ENCODE measurements at regions of chr5 and their contacts with region 1.

Region 1: GRCh38 chr5:137629646-137630045 is 106.2 kb downstream of the KLHL3 start:
- DNase-seq: no peak
- ATAC-seq: peak; percentile 69
- H3K4me3 Mint-ChIP-seq: no peak overlapping the region
- H3K27ac Mint-ChIP-seq: no peak overlapping the region
- H3K4me1 Mint-ChIP-seq: no peaks in the 10 kb centered on the region
- H3K27me3 Mint-ChIP-seq: no peaks in the 10 kb centered on the region

Region 2: DNA sequence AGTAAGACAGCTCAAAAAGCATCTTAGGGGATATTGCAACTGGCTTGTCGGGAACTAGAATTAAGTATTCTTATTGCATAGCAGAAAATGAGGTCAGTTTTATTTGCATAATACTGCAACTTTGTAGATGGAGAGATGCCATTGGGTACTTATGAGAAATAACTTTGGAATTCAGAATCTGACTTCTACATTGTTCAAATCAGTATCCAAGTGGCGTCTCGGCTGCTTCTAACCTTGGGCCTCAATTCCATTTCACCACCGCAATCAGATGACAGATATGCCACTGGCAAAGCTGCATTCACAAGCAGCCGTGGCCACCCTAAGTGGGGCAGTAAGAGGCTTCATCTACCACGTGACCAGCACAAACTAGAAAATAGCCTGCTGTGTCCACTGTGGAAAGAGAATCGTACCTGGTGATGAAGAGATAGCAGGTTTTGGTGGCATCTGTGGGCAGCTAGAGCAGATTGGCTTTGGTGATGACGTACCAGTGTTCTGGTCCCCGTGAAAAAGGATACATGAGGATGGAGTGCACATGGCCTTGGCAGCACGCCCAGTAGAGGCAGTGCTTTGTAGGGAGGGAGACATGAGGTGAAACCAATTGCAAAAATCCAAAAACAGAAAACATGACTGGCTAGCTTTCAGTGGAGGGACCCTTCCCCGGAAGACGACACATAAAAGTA is 10.3 kb before region 1 on chr5:
- CTCF ChIA-PET with region 1: interaction called, 18 read pairs
- POLR2A ChIA-PET with region 1: no interaction called
- intact Hi-C with region 1: no loop called
- DNase-seq: no peak
- ATAC-seq: no peak
- H3K4me3 Mint-ChIP-seq: no peak overlapping the region
- H3K27ac Mint-ChIP-seq: no peak overlapping the region
- H3K4me1 Mint-ChIP-seq: peaks cover under 1% of the 10 kb centered on the region
- H3K27me3 Mint-ChIP-seq: no peaks in the 10 kb centered on the region

Region 3: GRCh38 chr5:137695651-137696428 is 66.2 kb after region 1 on chr5:
- CTCF ChIA-PET with region 1: interaction called, 12 read pairs
- POLR2A ChIA-PET with region 1: no interaction called
- intact Hi-C with region 1: no loop called
- DNase-seq: peak; percentile 42
- ATAC-seq: peak; percentile 75
- H3K4me3 Mint-ChIP-seq: peak overlapping the region; percentile 40
- H3K27ac Mint-ChIP-seq: peak overlapping the region; percentile 89
- H3K4me1 Mint-ChIP-seq: peaks cover 51% of the 10 kb centered on the region
- H3K27me3 Mint-ChIP-seq: no peaks in the 10 kb centered on the region

Region 4: DNA sequence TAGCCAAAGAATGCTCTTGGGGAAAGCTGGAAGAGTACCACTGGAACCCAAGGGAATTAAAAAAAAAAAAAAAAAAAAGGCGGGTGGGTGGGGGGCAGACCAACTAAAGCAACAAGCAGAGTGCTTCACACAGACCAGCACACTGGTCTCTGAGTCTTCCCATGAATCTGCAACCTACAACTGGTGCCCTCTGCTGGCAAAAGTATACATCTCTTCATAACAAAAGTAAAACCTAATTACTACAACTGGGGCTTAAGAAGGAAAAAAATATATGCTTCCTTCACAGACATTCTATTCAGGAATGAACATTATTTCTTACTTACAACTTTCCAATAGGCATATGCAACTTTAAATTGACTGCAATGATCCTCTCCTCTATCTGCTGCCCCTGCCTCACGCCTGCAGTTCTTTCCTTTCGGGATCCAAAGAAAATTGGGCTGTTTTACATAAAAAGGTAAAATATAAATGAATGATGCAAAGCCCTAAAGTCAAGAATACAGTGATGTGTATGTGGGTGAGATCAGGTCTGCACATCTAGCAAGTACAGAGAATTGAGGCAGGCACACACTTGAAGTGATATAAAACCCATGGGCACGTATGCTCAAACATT is 113.5 kb after region 1 on chr5:
- CTCF ChIA-PET with region 1: interaction called, 142 read pairs
- POLR2A ChIA-PET with region 1: interaction called, 4 read pairs
- intact Hi-C with region 1: loop called (anchors 1 kb)
- DNase-seq: peak; percentile 75
- ATAC-seq: peak; percentile 91
- H3K4me3 Mint-ChIP-seq: no peak overlapping the region
- H3K27ac Mint-ChIP-seq: no peak overlapping the region
- H3K4me1 Mint-ChIP-seq: peaks cover 16% of the 10 kb centered on the region
- H3K27me3 Mint-ChIP-seq: no peaks in the 10 kb centered on the region

Region 5: DNA sequence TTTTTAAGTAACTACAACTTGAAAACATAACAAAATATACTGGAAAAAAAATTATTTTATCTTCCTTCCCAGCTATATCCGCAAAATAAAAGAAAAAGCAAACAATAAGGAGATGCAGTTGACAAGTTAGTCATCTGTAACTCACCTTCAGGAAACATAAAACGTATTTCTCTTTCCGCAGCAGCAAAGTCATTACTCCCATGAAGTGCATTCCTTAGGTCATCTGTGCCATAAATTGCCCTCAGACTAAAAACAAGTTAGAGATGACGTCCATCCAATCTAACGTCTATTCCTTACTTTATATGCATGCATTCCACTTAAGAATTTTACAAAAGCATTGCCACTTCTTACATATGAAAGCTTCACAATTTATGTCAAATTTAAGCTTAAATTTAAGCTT is 498.7 kb after region 1 on chr5:
- CTCF ChIA-PET with region 1: interaction called, 4 read pairs
- POLR2A ChIA-PET with region 1: no interaction called
- intact Hi-C with region 1: loop called (anchors 1 to 10 kb)
- DNase-seq: no peak
- ATAC-seq: no peak
- H3K4me3 Mint-ChIP-seq: no peak overlapping the region
- H3K27ac Mint-ChIP-seq: no peak overlapping the region
- H3K4me1 Mint-ChIP-seq: peaks cover 2% of the 10 kb centered on the region
- H3K27me3 Mint-ChIP-seq: no peaks in the 10 kb centered on the region